Posterior vena cava (tissue), 2 donors: ENCODE measurements at regions of chr10 and their contacts with region 1.

Region 1: GRCh38 chr10:87094373-87095235 is at the starts of genes GLUD1 and SHLD2:
- DNase-seq: peak; percentile 98
- total RNA-seq, gene GLUD1: 126 to 138 TPM
- total RNA-seq, gene SHLD2: 35.1 to 35.8 TPM

Region 2: GRCh38 chr10:86971232-86971991 is 123.2 kb before region 1 on chr10:
- intact Hi-C with region 1: loop called (anchors 10 kb)
- DNase-seq: peak; percentile 98